Gastrocnemius medialis (tissue), 4 donors: ENCODE measurements at regions of chr12 and their contacts with region 1.

Region 1: DNA sequence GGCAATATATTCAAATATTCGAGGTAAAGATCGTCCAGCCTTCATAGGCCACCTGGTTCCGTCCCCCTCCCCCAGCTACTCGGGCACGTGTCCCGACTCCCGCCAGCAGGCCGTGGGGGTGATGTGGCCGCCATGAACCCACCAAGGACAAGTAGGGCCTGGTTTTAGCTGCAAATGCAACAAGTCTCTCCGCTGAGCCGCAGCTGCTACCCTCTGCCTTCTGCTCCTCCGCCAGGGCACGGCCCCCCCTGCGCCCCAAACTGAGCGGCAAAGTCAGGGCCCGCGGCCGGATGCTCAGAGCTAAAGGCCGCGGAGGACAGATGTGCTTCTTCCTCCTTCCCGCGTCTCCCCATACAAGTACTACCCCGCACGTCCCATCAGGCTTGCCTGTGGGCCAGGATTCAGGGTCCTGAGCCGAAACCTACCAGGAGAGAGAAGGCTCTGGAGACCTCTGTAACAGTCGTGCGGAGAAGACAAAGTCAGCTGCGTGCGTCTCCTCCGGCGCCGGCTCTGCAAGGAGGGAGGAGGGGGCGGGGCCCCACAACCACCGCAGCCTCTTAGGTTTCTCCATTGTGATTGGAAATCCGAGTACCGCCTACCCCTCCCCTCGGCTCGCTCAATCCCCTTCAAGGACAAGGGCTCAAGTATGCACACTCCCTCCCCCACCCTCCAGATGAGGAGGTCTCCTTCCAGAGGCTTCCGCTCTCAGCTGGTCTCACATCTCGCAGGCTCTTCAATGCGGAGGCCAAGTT is at the start of gene LDHB:
- DNase-seq: peak; percentile 84 to 91
- ATAC-seq: peak; percentile 93 to 95
- H3K4me3 ChIP-seq: peak within 1 kb of the TSS; percentile 75 to 88 (median 77)
- H3K27ac ChIP-seq: peak within 1 kb of the TSS; percentile 79 to 87 (median 82)
- H3K4me1 ChIP-seq: peaks cover 18% of the 10 kb centered on the region in 2 donors
- H3K27me3 ChIP-seq: no peaks in the 10 kb centered on the region
- CTCF ChIP-seq: no peak
- POLR2A ChIP-seq: peak; percentile 67 to 84
- total RNA-seq, gene LDHB: 76.4 to 229 (median 125) TPM

Region 2: GRCh38 chr12:21438643-21439042 is 218.9 kb before region 1 on chr12:
- in situ Hi-C with region 1: no loop called
- intact Hi-C with region 1: loop called (anchors 5 kb)
- DNase-seq: no peak
- ATAC-seq: no peak
- H3K4me3 ChIP-seq: peak overlapping the region; percentile 59 to 94 (median 81)
- H3K27ac ChIP-seq: peak overlapping the region in 3 of 4 donors; percentile 72 to 94 (median 88)
- H3K4me1 ChIP-seq: peaks cover 7 to 9% of the 10 kb centered on the region in 2 donors
- H3K27me3 ChIP-seq: peaks cover 0 to 4% (median 0%) of the 10 kb centered on the region in 3 donors
- CTCF ChIP-seq: no peak
- POLR2A ChIP-seq: no peak

Region 3: GRCh38 chr12:21527451-21528180 is 129.9 kb before region 1 on chr12:
- in situ Hi-C with region 1: no loop called
- intact Hi-C with region 1: loop called (anchors 10 kb)
- DNase-seq: peak; percentile 25 to 62
- ATAC-seq: peak; percentile 75 to 87
- H3K4me3 ChIP-seq: peak overlapping the region; percentile 65 to 74 (median 68)
- H3K27ac ChIP-seq: peak overlapping the region; percentile 53 to 70 (median 62)
- H3K4me1 ChIP-seq: peaks cover 14 to 21% of the 10 kb centered on the region in 2 donors
- H3K27me3 ChIP-seq: no peaks in the 10 kb centered on the region
- CTCF ChIP-seq: peak in 2 of 5 experiments; percentile 14 to 44
- POLR2A ChIP-seq: no peak

Region 4: DNA sequence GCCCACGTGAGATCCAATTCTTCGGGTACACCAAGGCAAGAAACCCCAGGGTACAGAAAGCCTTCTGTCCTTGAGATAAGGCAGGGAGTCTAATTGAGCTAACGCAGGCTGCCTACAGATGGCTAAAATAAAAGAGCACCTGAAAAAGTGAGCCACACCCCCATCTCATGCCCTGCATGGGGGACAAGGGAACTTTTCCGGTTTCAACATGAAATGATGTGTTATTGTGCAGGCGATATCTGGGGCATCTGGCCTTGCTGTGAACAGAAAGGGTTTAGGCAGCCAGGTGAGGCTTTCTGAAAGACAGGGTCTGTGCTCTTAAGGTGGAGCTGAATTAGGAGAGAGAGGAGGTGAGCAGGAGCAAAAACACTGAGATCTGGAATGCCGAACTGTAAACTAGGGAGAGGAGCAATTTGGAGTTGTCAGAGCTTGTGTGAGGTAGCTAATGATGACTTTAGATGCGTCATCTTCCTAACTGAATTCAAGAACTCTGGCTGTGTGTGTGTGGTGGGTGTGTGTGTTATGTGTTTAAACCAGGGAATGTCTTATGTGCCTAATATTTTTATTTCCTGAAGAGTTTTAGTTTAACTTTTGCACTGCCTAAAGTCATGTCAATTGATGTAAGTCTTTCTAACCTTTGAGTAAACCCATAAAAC is 20.2 kb after region 1 on chr12:
- in situ Hi-C with region 1: no loop called
- intact Hi-C with region 1: loop called (anchors 2 kb)
- DNase-seq: no peak
- ATAC-seq: no peak
- H3K4me3 ChIP-seq: no peak overlapping the region
- H3K27ac ChIP-seq: no peak overlapping the region
- H3K4me1 ChIP-seq: no peaks in the 10 kb centered on the region
- H3K27me3 ChIP-seq: no peaks in the 10 kb centered on the region
- CTCF ChIP-seq: no peak
- POLR2A ChIP-seq: no peak

Region 5: GRCh38 chr12:21764065-21764464 is 106.6 kb after region 1 on chr12:
- in situ Hi-C with region 1: no loop called
- intact Hi-C with region 1: no loop called
- DNase-seq: no peak
- ATAC-seq: no peak
- H3K4me3 ChIP-seq: no peak overlapping the region
- H3K27ac ChIP-seq: no peak overlapping the region
- H3K4me1 ChIP-seq: no peaks in the 10 kb centered on the region
- H3K27me3 ChIP-seq: no peaks in the 10 kb centered on the region
- CTCF ChIP-seq: no peak
- POLR2A ChIP-seq: no peak